SK-N-SH (cell line): ENCODE measurements at regions of chr10 and their contacts with region 1.

Region 1: DNA sequence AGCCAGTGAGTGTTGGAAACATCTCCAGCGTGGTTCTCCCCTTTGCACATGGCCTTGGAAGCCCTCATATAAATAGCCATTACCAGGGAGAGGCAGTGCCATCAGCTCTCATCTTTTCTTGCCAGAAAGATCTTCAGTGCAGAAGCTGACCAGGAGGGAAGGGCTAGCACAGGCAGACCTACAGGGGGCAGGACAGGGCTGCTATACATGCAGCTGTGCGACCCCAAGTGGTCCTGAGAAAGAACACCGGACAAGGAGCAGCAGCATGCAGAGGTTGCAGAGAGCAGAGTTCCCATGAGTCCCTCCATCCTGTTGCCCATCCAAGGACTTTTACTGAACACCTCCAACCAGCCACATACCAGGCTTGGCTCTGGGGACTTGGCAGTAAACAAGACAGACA is 17.1 kb downstream of the GRID1 start:
- DNase-seq: peak; percentile 70
- H3K4me3 ChIP-seq: no peak overlapping the region; a peak in 1 of 4 replicates
- H3K27ac ChIP-seq: no peak overlapping the region
- H3K4me1 ChIP-seq: peaks cover 0 to 42% of the 10 kb centered on the region in 2 experiments; a peak in 2 of 4 replicates
- H3K27me3 ChIP-seq: no peaks in the 10 kb centered on the region
- CTCF ChIP-seq: peak; percentile 38
- EP300 ChIP-seq: no peak
- RAD21 ChIP-seq: peak; percentile 66

Region 2: GRCh38 chr10:85995791-85996190 is 353.7 kb before region 1 on chr10:
- CTCF ChIA-PET with region 1: interaction called, 11 read pairs
- POLR2A ChIA-PET with region 1: no interaction called
- DNase-seq: peak; percentile 29
- H3K4me3 ChIP-seq: no peak overlapping the region
- H3K27ac ChIP-seq: no peak overlapping the region
- H3K4me1 ChIP-seq: no peaks in the 10 kb centered on the region; a peak in 1 of 4 replicates
- H3K27me3 ChIP-seq: no peaks in the 10 kb centered on the region
- CTCF ChIP-seq: no peak
- EP300 ChIP-seq: no peak
- RAD21 ChIP-seq: peak; percentile 62

Region 3: GRCh38 chr10:86261941-86262687 is 87.4 kb before region 1 on chr10:
- CTCF ChIA-PET with region 1: interaction called, 32 read pairs
- POLR2A ChIA-PET with region 1: interaction called, 4 read pairs
- DNase-seq: no peak
- H3K4me3 ChIP-seq: no peak overlapping the region
- H3K27ac ChIP-seq: no peak overlapping the region
- H3K4me1 ChIP-seq: peaks cover 0 to 53% of the 10 kb centered on the region in 2 experiments; a peak in 2 of 4 replicates
- H3K27me3 ChIP-seq: no peaks in the 10 kb centered on the region
- CTCF ChIP-seq: no peak
- EP300 ChIP-seq: no peak
- RAD21 ChIP-seq: peak; percentile 63

Region 4: DNA sequence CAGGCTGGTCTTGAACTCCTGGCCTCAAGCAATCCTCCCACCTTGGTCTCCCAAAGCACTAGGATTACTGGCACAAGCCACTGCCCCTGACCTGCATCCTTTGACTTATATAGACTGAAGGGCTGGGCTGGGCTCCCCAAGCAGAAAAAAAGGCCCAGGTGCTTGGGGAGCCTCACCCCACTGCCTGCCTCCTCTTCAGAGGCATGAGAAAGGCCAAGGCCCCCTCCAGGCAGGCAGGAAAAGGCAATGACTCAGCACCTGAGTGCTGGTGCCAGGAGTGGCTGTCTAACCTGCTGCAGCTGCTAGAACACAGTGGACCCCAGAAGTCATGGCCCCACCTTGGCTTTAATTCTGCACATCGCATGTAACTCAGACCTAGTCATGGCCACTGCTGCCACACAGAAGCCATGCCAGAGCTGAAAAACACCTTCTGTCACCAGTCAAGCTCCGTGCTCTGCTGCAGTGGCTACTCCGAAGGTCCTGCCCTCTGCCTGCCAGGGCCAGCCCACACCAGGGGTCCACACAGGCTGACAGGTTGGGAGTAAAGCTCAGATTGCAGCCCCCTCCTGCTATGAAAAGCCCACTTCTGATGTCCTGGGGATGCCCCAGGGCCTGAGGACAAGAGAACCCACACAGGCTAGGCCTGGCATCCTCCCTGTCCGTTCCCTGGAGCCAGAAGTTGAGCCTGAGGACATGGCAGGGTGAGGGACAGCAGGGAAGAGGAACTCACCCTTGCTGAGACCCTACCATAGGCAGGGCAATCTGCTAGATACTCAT is 31.3 kb before region 1 on chr10:
- CTCF ChIA-PET with region 1: interaction called, 10 read pairs
- POLR2A ChIA-PET with region 1: interaction called, 6 read pairs
- DNase-seq: no peak
- H3K4me3 ChIP-seq: no peak overlapping the region
- H3K27ac ChIP-seq: no peak overlapping the region
- H3K4me1 ChIP-seq: peaks cover 0 to 51% of the 10 kb centered on the region in 2 experiments; a peak in 2 of 4 replicates
- H3K27me3 ChIP-seq: no peaks in the 10 kb centered on the region
- CTCF ChIP-seq: no peak
- EP300 ChIP-seq: no peak
- RAD21 ChIP-seq: no peak

Region 5: GRCh38 chr10:86371691-86372090 is 22.2 kb after region 1 on chr10:
- CTCF ChIA-PET with region 1: interaction called, 191 read pairs
- POLR2A ChIA-PET with region 1: interaction called, 3 read pairs
- DNase-seq: no peak
- H3K4me3 ChIP-seq: no peak overlapping the region
- H3K27ac ChIP-seq: no peak overlapping the region
- H3K4me1 ChIP-seq: peaks cover 0 to 3% of the 10 kb centered on the region in 2 experiments; a peak in 1 of 4 replicates
- H3K27me3 ChIP-seq: peaks cover 32% of the 10 kb centered on the region
- CTCF ChIP-seq: no peak
- EP300 ChIP-seq: no peak
- RAD21 ChIP-seq: no peak

Region 6: GRCh38 chr10:86500846-86501245 is 151.4 kb after region 1 on chr10:
- CTCF ChIA-PET with region 1: no interaction called
- POLR2A ChIA-PET with region 1: no interaction called
- DNase-seq: no peak
- H3K4me3 ChIP-seq: no peak overlapping the region
- H3K27ac ChIP-seq: no peak overlapping the region
- H3K4me1 ChIP-seq: peaks cover 0 to 14% of the 10 kb centered on the region in 2 experiments; a peak in 1 of 4 replicates
- H3K27me3 ChIP-seq: no peaks in the 10 kb centered on the region
- CTCF ChIP-seq: no peak
- EP300 ChIP-seq: no peak
- RAD21 ChIP-seq: no peak